ENCODE measurements at regions of chr4 and their contacts with region 1.

Region 1: GRCh38 chr4:33270403-33270802 is 2550.2 kb downstream of the PCDH7 start:
- DNase-seq: no peak
- ATAC-seq: no peak

Region 2: DNA sequence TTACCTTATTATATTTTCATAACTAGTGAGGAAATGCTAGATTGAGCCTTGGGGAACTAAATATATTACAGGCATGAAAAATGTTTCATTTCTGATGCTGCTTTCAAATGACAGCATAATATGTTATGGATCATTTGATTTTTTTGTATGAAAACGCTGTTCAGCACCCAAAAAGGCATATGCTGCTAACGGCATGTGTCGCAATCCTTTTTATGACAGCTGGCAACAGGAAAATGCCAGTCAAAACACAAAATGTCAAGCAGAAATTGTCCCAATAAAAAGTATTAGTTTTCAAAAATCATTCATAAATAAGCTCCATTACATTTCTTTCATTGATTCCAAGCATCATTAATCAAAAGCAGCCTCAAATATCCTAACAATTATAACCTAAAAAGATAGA is 1305.7 kb before region 1 on chr4:
- intact Hi-C with region 1: loop called (anchors 10 kb)
- DNase-seq: no peak
- ATAC-seq: no peak